ENCODE measurements at regions of chr6 and their contacts with region 1.

Region 1: DNA sequence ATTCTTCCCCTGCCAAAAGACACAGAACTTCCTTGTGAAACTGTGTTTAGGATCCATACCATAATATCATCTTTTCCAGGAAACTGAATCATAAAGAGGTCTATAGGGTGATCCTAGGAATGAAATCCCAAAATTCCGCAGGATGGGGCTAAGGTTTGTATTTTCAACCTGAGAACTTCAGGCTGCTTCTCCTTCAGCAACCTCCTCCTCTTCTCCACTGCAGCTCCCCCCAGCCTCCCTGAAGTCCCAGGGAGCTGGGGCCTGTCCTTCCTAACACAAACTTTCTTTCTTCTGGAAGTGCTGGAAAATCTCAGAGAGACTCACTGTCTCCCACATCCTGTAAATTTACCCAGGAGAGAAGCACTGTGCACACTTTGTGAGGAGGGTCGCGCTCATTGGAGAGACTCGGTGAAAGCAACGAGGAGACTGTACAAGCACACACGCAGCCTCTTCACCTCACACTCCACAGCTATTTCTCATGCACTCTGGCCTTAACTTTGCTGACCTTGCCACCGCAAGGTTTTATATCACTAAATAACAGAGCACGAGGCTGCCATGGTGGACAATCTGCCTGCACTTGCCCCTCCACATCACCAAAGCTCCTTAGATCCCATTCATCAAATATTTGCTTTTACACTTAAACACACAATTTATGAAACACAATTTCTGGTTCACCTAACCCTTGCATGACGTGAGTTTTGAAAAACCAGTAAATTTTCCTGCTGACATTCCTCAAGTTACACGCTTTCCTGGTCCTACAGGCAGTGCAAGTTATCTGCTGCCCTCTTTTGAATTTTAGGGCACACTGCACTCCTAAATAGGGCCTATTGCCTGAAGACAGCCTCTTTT is 14.3 kb downstream of the ID4 start:
- DNase-seq: peak in 1 of 2 donors; percentile 7
- ATAC-seq: peak; percentile 93

Region 2: DNA sequence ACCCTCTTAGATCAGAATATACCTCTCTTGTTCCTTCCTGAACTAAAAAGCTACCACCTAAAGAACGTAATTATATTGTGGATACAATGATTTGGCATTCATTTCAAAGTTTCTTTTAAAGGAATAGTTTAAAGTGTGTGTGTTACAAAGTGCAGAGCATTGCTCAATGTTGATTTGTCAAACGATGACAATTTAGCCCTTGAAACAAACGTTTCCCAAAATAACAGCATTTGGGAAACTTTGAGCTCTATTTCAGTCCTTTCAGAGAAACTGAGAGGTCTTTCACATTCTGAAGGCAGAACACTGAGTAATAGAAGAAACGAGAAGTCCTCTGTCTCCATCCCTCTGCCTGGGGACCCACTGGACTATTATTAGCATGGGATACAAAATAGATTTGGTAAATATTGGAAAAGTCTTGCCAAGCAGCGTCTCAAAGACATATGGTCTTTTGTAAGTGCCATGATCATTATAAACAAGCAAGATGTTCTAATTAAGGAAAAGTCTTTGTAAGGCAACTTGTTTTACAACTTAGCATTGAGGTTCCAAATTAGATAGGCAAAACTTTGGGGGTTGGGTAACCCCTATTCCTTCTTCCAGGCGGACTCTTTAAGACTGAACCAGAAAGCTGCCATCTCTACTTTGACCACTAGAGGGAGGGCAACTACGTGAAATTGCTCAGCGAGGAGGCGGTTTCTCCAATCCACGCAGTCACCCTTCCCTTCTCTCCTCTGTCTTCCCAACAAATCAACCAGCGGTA is 1255.5 kb before region 1 on chr6:
- intact Hi-C with region 1: loop called in 1 of 2 experiments (anchors 10 kb)
- DNase-seq: peak; percentile 25 to 36
- ATAC-seq: peak; percentile 81

Measured in left colon (tissue), 2 donors.